ENCODE measurements at regions of chr17 and their contacts with region 1.

Region 1: GRCh38 chr17:29148790-29149430 is 31.3 kb downstream of the MYO18A start:
- DNase-seq: peak; percentile 98
- ATAC-seq: peak; percentile 94
- H3K4me3 Mint-ChIP-seq: peak overlapping the region; percentile 72
- H3K27ac Mint-ChIP-seq: peak overlapping the region; percentile 95
- H3K4me1 Mint-ChIP-seq: peaks cover 38% of the 10 kb centered on the region
- H3K27me3 Mint-ChIP-seq: no peaks in the 10 kb centered on the region
- CTCF ChIP-seq: peak; percentile 89

Region 2: GRCh38 chr17:29059281-29059680 is 89.6 kb before region 1 on chr17:
- CTCF ChIA-PET with region 1: no interaction called
- POLR2A ChIA-PET with region 1: no interaction called
- DNase-seq: no peak
- ATAC-seq: no peak
- H3K4me3 Mint-ChIP-seq: no peak overlapping the region
- H3K27ac Mint-ChIP-seq: no peak overlapping the region
- H3K4me1 Mint-ChIP-seq: peaks cover 43% of the 10 kb centered on the region
- H3K27me3 Mint-ChIP-seq: no peaks in the 10 kb centered on the region
- CTCF ChIP-seq: no peak

Region 3: DNA sequence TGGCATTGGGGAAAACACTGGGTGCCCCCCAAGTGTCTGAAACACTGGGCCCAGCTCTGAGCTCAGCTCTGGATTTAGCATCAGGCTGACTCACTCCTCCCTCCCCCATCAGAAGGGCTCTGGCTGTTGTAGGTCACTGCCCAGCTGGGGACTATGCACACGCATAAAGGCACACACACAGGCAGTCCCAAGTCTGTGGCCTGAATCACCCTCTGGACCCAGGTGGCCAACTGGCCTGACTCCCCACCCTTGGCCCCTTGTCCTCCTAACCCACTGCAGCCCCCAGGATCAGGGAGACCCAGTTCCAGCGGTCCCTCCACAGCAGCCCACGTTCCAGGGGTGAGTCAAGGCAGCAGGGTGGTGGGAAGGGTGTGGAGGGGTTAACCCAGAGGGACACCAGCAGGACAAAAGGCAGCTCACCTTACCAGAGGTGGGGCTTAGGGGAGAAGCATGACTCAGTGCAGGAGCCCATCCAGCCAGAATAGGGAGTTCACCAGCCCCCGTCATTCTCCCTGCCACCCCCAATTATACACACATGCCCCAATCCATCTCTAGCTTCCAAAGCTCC is 15.7 kb before region 1 on chr17:
- CTCF ChIA-PET with region 1: interaction called, 269 read pairs
- POLR2A ChIA-PET with region 1: interaction called, 7 read pairs
- DNase-seq: no peak
- ATAC-seq: peak; percentile 83
- H3K4me3 Mint-ChIP-seq: no peak overlapping the region
- H3K27ac Mint-ChIP-seq: peak overlapping the region; percentile 30
- H3K4me1 Mint-ChIP-seq: peaks cover 27% of the 10 kb centered on the region
- H3K27me3 Mint-ChIP-seq: no peaks in the 10 kb centered on the region
- CTCF ChIP-seq: no peak

Region 4: GRCh38 chr17:29168079-29168758 is 19.3 kb after region 1 on chr17:
- CTCF ChIA-PET with region 1: interaction called, 28 read pairs
- POLR2A ChIA-PET with region 1: no interaction called
- DNase-seq: no peak
- ATAC-seq: no peak
- H3K4me3 Mint-ChIP-seq: no peak overlapping the region
- H3K27ac Mint-ChIP-seq: peak overlapping the region; percentile 84
- H3K4me1 Mint-ChIP-seq: peaks cover 12% of the 10 kb centered on the region
- H3K27me3 Mint-ChIP-seq: no peaks in the 10 kb centered on the region
- CTCF ChIP-seq: no peak

Region 5: DNA sequence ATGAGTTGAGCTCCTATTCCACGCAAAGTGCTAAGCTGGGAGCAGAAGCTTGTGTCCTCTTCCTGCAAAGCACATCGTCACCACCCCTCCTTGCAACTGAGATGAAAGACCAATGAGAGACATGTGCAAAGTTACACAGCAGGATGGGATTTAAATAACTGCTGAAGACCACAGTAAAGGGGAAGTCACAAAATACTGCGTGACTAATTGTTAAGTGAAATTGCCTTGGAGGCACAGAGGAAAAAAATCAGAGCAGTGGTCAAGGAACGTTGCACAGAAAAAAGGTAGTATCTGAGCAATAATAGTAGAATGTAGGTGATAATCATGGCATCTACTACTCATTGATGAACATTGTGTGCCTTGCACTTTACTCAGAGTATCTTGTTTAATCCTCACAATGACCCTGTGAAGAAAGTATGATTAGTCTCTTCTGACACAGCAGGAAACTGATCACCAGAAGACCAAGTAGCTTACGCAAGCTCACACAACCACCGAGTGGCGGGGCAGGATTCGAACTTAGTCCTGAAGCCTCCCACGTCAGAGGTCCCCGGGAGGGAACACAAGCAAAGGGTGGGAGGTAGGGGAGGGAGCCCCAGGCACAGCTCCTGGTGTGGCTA is 46.7 kb after region 1 on chr17:
- CTCF ChIA-PET with region 1: interaction called, 10 read pairs
- POLR2A ChIA-PET with region 1: no interaction called
- DNase-seq: no peak
- ATAC-seq: no peak
- H3K4me3 Mint-ChIP-seq: no peak overlapping the region
- H3K27ac Mint-ChIP-seq: no peak overlapping the region
- H3K4me1 Mint-ChIP-seq: peaks cover 6% of the 10 kb centered on the region; the same call in 1 of the 2 replicates
- H3K27me3 Mint-ChIP-seq: no peaks in the 10 kb centered on the region
- CTCF ChIP-seq: no peak

Region 6: GRCh38 chr17:29219378-29220047 is 70.6 kb after region 1 on chr17:
- CTCF ChIA-PET with region 1: interaction called, 222 read pairs
- POLR2A ChIA-PET with region 1: no interaction called
- DNase-seq: peak; percentile 89
- ATAC-seq: peak; percentile 97
- H3K4me3 Mint-ChIP-seq: no peak overlapping the region
- H3K27ac Mint-ChIP-seq: no peak overlapping the region
- H3K4me1 Mint-ChIP-seq: peaks cover 6% of the 10 kb centered on the region
- H3K27me3 Mint-ChIP-seq: no peaks in the 10 kb centered on the region
- CTCF ChIP-seq: peak; percentile 82

Region 7: GRCh38 chr17:29252101-29252866 is 103.4 kb after region 1 on chr17:
- CTCF ChIA-PET with region 1: interaction called, 14 read pairs
- POLR2A ChIA-PET with region 1: interaction called, 3 read pairs
- DNase-seq: no peak
- ATAC-seq: peak; percentile 58
- H3K4me3 Mint-ChIP-seq: no peak overlapping the region
- H3K27ac Mint-ChIP-seq: no peak overlapping the region
- H3K4me1 Mint-ChIP-seq: no peaks in the 10 kb centered on the region
- H3K27me3 Mint-ChIP-seq: no peaks in the 10 kb centered on the region
- CTCF ChIP-seq: peak; percentile 44

Region 8: GRCh38 chr17:29369831-29370735 is 221.2 kb after region 1 on chr17:
- CTCF ChIA-PET with region 1: interaction called, 10 read pairs
- POLR2A ChIA-PET with region 1: no interaction called
- DNase-seq: peak; percentile 68
- ATAC-seq: peak; percentile 94
- H3K4me3 Mint-ChIP-seq: no peak overlapping the region
- H3K27ac Mint-ChIP-seq: no peak overlapping the region
- H3K4me1 Mint-ChIP-seq: peaks cover 7% of the 10 kb centered on the region
- H3K27me3 Mint-ChIP-seq: no peaks in the 10 kb centered on the region
- CTCF ChIP-seq: peak; percentile 69

Measured in WTC11 (cell line).